Left lung (tissue), 14 donors: ENCODE measurements at regions of chr2 and their contacts with region 1.

Region 1: GRCh38 chr2:64045938-64046337 is 26.7 kb upstream of the VPS54 start:
- DNase-seq: no peak
- ATAC-seq: no peak
- H3K4me3 ChIP-seq: no peak overlapping the region
- H3K27ac ChIP-seq: no peak overlapping the region
- H3K4me1 ChIP-seq: peaks cover 0 to 9% of the 10 kb centered on the region in 2 donors
- H3K27me3 ChIP-seq: no peaks in the 10 kb centered on the region
- CTCF ChIP-seq: no peak

Region 2: DNA sequence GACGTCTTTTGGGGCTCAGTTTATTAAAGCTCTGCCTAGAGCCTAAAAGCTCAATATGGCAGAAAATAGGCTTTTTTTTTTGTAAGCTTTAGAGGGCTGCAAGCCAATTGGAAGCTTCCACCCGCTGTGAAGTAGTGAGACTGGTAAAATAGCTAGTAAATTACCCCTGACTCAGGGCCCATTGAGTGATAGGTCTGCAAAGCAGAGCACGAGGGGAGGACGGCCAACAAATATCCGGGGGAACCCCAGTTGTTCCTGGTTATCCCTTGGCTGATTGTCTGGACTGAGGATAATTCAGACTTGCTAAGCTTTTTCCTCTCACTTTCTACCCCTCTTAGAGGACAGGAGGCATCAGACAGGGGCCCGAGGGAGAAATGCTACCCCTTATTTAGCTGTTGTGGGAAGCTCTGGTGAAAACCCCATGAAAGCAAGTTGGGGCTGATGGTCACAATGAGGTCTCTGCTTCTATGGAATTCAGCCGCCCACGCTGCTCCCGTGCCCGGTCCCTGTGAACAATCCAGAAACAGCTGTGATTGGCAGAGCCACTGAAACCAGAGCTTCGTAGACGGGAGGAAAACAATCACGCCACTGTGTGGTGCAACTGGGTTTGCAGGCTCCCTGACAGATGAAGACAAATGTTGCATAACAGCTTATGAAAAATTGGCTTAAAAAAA is 266.1 kb after region 1 on chr2:
- intact Hi-C with region 1: loop called in 1 of 2 experiments (anchors 5 kb)
- DNase-seq: peak in 2 of 4 donors; percentile 79 to 84
- ATAC-seq: peak; percentile 99
- H3K4me3 ChIP-seq: no peak overlapping the region
- H3K27ac ChIP-seq: peak overlapping the region in 1 of 2 donors; percentile 28
- H3K4me1 ChIP-seq: peaks cover 7 to 13% of the 10 kb centered on the region in 2 donors
- H3K27me3 ChIP-seq: no peaks in the 10 kb centered on the region
- CTCF ChIP-seq: peak; percentile 33 to 53

Region 3: DNA sequence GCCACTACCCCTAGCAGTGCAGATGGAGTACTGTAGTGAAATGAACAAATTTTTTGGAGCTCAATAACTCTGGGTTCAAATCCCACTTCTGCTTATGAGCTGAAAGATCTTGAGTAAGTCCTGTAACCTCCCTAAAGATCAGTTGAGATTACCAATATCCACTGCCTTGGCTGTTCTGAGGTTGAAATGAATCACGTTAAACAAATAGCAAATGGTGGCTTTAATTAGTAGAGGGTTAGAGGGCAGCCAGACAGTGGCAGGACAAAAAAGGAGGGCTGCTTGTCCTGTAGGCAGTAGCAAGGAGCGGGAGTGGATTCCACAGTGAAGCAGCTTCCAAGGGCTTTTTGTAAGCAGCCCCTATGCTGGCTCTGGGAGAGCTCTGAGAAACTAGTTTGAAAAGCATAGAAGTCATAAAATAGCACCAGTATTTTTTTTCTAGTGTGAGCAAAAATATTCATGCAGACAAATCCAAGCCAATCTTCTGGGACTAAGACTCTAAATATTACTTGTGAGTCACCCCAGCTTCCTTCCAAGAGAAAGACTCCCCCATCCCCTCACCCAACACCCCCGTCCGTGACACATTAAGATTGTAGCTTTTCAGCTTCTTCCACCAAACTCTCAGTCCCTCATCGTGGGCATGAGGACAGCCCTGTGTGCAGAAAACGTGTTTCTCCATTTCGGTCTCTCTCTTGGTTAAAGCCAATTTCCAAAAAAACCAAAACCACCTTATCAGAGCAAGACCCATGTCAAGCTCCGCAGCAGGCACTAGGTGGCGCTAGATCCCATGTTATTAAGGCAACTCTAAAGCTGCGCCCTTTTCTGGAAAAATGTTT is 284.6 kb after region 1 on chr2:
- intact Hi-C with region 1: loop called in 1 of 2 experiments (anchors 5 kb)
- DNase-seq: peak; percentile 78 to 93 (median 87)
- ATAC-seq: peak; percentile 82
- H3K4me3 ChIP-seq: no peak overlapping the region
- H3K27ac ChIP-seq: peak overlapping the region; percentile 21 to 79
- H3K4me1 ChIP-seq: peaks cover 10 to 46% of the 10 kb centered on the region in 2 donors
- H3K27me3 ChIP-seq: no peaks in the 10 kb centered on the region
- CTCF ChIP-seq: peak; percentile 87 to 90